ENCODE measurements at regions of chr11 and their contacts with region 1.

Region 1: DNA sequence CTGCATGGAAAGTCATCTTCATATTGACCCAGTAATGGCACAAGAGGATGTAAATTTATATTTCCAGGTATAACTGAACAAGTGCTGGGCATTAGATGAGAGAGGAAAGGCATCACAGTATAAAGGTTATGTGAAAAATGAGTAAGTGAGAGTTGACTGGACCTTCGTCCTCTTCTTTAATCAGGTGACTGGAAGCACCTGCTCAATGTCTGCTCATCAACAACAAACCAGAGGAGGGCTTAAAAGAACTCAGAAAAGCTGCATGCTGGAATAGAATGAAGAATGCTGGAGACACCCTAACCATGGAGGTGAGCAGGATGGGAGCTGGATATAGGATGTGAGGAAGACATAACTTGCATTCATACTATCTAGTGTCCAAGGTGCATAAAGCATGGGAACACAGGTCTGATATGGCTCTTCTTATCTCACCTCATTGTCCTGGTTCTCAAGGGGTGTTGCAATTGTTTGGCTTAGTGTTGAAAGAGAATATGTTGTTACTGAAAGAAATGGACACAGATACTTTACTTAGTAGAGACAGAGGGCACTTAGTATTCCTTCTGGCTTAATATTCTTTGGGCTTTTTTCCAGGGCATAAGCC is 7.3 kb upstream of the SLC22A9 start:
- DNase-seq: no peak
- ATAC-seq: no peak
- H3K4me3 ChIP-seq: no peak overlapping the region
- H3K4me3 Mint-ChIP-seq: no peak overlapping the region
- H3K27ac ChIP-seq: no peak overlapping the region
- H3K27ac Mint-ChIP-seq: no peak overlapping the region
- H3K4me1 ChIP-seq: no peaks in the 10 kb centered on the region
- H3K4me1 Mint-ChIP-seq: no peaks in the 10 kb centered on the region
- H3K27me3 ChIP-seq: no peaks in the 10 kb centered on the region
- H3K27me3 Mint-ChIP-seq: peaks cover 2 to 48% (median 47%) of the 10 kb centered on the region in 5 donors

Region 2: DNA sequence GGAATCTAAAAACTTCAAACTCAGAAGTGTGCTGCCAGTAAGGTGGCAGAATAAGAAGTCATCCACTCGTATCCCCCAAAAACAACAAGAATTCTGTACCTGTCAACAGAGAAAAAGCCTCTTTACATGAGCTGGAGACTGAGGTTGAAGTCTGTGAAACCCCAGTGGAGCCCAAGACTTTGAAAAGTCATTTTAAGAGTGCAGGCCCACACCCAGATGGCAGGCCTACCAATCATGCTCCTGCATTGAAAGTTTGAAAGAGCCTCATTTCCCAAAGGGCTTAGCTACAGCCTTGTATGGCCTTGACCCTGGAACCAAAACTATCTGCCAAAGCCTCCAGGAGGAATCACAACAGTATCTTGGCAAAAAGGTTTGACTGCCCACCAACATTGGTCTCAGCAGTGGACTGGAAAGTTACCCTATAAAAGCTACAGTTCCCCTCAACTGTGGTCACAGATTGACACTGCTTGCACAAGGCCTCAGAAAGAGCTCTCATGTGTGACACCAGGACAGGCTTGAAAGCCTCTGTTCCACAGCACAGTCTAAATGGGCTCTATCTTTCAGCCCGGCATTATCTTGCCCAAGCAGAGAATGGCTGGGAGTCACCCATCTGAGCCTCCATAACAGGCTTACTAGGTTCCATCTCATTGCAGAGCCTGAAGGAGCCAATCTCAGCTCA is 55.0 kb after region 1 on chr11:
- CTCF ChIA-PET with region 1: no interaction called
- POLR2A ChIA-PET with region 1: no interaction called
- intact Hi-C with region 1: loop called in 1 of 2 experiments (anchors 5 kb)
- DNase-seq: no peak
- ATAC-seq: no peak
- H3K4me3 ChIP-seq: no peak overlapping the region
- H3K4me3 Mint-ChIP-seq: no peak overlapping the region
- H3K27ac ChIP-seq: no peak overlapping the region
- H3K27ac Mint-ChIP-seq: no peak overlapping the region
- H3K4me1 ChIP-seq: peaks cover 0 to 7% of the 10 kb centered on the region in 2 donors
- H3K4me1 Mint-ChIP-seq: peaks cover 9 to 33% (median 14%) of the 10 kb centered on the region in 7 donors
- H3K27me3 ChIP-seq: no peaks in the 10 kb centered on the region
- H3K27me3 Mint-ChIP-seq: peaks cover 0 to 6% (median 5%) of the 10 kb centered on the region in 5 donors

Measured in naive thymus-derived CD4-positive, alpha-beta T cell (primary cell).